Head of caudate nucleus (tissue), 42 donors: ENCODE measurements at regions of chr7 and their contacts with region 1.

Region 1: DNA sequence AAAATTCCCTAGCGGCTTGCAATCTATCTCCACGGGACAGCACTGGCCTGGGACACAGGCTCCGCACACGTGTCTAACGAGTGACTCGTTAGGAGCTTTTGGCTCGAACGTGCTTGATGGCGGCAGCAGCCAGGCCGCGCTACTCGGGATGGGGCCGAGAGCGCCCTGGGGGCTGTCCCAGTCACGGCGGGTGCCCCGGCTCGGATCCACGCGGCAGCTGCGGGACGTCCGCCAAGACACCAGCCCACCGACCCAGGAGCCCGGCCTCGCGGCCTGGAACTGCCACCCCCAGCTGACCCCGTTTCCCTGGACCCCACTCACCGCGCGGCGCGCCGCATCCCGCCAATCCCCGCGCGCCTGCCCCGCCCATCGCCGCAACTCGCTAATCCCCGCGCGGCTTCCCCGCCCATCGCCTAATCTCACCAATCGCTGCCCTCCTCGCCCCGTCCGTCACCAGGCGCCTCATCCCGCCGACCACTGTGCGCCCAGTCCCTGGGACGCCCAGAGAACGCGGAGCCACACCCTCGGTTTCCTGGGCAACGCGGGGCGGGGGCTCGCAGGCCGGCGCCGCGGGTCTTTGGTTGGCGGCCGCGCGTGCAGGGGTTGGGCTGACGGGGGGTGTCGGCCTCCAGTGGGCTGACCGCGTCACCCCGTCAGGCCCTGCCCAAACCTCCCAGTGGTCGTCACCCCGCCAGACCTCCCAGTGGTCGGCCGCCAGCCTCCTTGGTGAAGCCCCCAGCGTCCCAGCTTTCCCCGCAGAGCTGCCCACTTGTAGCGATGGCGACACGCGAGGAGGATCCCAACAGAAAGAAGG is at the start of gene POLD2:
- DNase-seq: peak; percentile 95 to 99 (median 99)

Region 2: DNA sequence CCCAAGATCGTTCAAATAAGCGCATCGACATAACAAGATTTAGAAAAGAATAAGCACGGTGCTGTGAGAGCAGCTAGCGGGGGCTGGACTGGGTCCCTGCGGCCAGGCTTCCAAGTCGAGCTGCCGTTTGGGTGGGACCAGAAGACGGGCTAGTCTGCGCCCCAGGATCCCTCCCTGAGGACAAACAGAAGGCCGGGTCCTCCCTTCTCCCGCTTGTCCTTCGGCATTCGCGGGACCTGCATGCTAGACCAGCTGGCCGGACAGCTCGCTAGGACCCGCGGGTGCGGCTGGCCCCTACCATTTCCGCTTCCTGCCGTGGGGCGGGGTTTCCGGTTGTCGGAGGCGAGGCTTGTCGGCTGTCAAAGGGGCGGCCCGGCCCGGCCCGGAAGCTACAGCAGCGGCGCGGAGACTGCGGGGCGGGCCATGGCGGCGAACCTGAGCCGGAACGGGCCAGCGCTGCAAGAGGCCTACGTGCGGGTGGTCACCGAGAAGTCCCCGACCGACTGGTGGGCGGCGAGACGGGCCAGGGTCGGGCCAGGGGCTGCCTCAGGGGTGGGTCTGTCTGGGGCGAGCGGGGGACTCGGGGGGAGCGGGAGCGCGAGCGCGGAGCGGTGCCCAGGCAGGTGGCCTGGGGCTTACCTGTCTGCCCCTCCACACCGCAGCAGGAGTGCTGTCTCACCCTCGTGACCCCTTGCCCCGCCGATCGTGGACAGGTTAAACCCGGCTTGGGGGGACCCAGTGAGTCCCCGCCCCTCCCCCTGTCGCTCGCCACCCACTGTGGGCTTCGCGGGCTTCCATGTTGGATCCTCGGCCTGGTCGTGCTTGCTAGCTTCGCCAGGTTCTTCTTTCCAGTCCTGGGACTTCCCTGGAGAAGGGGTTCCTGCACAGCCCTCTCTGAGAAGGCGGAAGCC is 78.8 kb before region 1 on chr7 and contains the start of gene DBNL:
- intact Hi-C with region 1: loop called (anchors 10 kb)
- DNase-seq: peak; percentile 93 to 100 (median 98)